HEK293T (cell line): ENCODE measurements at regions of chr1 and their contacts with region 1.

Region 1: DNA sequence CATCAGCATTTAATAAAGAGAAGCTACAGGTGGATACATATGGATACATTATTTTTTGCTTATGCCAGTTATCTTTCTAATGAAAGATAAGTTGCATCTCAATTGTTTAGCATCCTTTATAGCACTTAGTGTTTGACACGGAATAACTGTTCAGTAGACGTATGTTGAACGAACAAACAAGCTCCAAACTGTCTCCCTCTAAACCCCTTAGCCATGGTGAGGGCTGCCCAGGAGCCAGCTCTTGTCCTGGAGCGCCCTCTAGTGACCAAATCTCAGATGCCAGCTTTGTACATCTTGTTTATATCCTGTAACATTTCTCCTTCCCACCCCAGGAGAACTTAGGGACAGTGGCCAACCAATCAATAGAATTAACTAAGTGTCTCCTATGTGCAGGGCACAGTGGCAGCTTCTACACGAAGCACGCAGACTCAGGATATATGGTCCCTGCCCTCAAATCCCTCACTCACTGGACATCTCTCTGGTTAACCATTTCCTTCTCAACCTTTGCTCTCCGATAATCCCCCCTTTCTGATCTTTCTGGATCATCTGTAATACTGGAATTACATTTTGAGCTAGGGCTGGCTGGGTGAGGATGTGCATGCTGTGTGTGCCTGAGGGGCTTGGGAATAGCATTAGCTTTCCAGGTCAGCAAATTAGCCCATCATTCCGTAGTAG is 22.9 kb downstream of the KCNA10 start:
- DNase-seq: peak; percentile 92

Region 2: DNA sequence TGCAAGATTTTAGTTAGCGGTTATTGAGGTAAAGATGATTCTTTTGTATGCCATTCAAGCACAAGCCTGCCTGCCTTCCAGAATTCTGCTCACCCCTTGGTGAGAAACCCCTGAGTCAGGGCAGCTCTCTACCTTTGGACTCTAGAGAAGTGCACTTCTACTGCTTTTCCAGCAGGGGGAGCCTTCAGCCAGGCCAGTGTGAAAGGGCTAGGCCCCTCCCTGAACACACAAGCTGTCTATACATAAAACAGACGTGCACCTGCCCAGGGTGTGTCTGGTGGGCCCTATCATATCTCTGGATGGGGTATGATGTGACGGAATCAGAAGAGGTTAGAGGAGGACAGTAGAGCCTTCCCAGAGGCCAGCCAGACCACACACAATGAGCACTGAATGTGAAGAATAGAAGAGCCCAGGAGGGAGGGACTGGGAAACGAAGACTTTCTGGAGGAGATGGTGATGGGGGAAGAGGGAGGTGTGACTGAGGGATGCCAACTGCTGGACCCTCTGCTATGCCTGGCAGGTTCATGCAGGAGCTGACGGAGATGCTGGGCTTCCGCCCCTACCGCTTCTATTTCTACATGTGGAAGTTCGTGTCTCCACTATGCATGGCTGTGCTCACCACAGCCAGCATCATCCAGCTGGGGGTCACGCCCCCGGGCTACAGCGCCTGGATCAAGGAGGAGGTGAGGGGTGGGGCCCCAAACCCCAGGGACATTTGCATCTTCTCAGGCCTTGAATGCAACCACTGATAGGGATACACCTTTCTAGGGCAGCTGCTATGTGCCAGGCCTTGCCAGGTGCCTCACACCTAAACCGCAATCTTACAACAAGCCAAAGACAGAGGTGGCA is 298.9 kb before region 1 on chr1:
- CTCF ChIA-PET with region 1: interaction called, 25 read pairs
- POLR2A ChIA-PET with region 1: no interaction called
- DNase-seq: peak; percentile 93

Region 3: DNA sequence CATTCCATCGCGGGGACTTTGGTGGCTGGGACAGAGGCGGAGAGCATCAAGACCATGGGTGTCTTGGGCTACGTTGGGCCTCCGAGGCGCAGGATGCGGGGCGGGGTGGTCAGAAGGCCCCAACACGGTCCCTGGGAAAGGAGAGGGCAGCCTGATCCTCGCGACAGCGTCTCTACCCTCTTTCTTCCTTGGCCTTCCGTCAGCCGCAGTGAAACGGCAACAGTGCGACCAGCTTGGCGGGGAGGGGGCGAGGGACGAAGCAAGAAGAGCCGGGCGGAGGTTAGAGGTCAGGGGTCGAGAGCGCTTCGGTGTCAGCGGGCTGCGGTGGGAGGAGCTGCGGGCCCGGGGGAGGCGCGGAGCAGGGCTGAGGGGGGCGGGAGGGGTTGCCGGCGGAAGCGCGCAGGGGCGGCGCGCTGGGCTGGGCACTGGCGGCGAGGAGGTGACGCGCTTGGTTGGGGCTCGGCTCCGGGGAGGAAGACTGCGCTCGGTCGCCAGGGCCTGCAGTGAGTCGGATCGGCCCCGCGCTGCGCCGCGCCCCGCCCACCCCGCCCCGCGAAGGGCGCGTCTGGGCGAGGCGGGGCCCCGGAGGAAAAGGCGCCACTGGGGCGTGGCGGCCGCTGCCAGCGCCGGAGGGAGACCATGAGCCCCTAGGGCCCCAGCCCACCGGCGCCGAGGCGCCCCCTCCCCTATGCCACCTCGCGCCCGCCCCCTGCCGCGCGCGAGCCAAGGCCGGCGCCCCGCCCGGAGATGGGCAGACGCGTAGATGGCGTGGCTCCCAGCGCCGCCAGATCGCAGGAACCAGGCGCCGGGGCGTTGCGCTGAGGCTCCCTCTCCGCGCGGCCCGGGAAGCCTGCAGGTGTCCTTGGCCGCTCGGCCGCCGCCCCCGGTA is 286.1 kb before region 1 on chr1 and contains the start of gene KCNC4:
- CTCF ChIA-PET with region 1: interaction called, 41 read pairs
- POLR2A ChIA-PET with region 1: interaction called, 4 read pairs
- DNase-seq: peak; percentile 91

Region 4: GRCh38 chr1:110338886-110339406 is 157.1 kb before region 1 on chr1 and contains the start of gene RBM15:
- CTCF ChIA-PET with region 1: interaction called, 13 read pairs
- POLR2A ChIA-PET with region 1: interaction called, 5 read pairs
- DNase-seq: peak; percentile 96

Region 5: GRCh38 chr1:110412576-110412975 is 83.5 kb before region 1 on chr1:
- CTCF ChIA-PET with region 1: interaction called, 17 read pairs
- POLR2A ChIA-PET with region 1: interaction called, 5 read pairs
- DNase-seq: peak; percentile 77

Region 6: GRCh38 chr1:110477041-110477440 is 19.0 kb before region 1 on chr1:
- CTCF ChIA-PET with region 1: interaction called, 14 read pairs
- POLR2A ChIA-PET with region 1: no interaction called
- DNase-seq: no peak

Region 7: DNA sequence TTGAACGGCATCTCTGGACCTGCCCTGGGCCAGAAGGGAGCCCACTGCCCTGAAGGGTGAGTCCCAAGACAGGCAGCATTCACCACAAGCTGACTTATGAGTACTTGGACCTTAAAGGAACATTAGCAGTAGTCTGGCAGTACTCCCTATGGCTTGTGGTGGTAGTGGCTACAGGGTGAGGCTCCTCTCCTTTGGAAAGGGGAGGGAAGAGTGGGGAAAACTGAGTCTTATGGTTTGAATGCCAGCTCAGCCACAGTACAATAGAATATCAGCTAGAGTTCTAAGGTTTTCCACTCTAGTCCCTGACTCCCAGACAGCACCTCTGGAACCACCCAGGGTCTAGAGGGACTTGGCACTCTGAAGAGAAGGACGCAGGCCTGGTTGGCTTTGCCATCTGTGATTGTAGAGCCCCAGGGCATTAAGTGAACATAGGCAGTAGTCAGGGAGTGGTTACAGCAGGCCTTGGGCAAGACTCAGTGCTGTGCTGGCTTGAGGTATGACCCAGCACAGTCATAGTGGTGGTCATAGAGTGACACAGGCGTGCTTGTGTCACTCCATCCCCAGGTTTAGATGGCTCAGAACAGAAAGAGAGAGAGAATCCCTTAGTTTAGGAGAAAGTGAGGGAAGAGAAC is 407.9 kb after region 1 on chr1:
- CTCF ChIA-PET with region 1: no interaction called
- POLR2A ChIA-PET with region 1: no interaction called
- DNase-seq: no peak